ENCODE measurements at regions of chr6 and their contacts with region 1.

Region 1: DNA sequence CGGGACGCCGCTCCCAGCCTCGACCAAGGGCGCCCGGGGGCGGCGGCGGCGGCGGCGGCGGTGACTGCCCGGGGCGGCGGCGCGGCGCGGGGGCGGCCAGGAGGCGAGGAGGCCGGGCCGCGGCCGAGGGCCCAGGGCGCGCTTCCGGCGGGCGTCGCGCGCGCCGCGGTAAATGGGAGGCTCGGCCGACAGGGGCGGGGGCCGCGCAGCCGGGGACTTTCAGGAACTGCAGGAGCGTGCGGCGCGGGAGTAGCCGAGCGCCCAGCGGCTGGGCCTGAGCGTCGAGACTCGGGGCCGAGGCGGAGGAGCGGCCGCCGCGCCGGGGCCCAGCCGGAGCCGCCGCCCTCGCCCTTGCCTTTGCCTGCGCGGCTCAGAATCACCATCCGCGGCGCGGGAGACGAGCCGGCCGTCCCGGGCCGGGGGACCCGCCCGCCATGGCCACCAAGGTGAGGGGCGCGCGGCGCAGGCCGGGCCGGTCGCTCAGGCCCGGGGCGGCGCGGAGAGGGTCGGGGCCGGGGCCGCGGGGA is at the start of gene SNX9:
- DNase-seq: peak; percentile 27 to 81 (median 63)
- ATAC-seq: peak; percentile 46
- H3K4me3 ChIP-seq: peak within 1 kb of the TSS; percentile 43 to 51
- H3K4me3 Mint-ChIP-seq: peak within 1 kb of the TSS; percentile 93
- H3K27ac ChIP-seq: peak within 1 kb of the TSS; percentile 74 to 87
- H3K27ac Mint-ChIP-seq: peak within 1 kb of the TSS; percentile 98
- H3K4me1 ChIP-seq: peaks cover 21% of the 10 kb centered on the region
- H3K4me1 Mint-ChIP-seq: peaks cover 34% of the 10 kb centered on the region
- H3K27me3 ChIP-seq: no peaks in the 10 kb centered on the region
- H3K27me3 Mint-ChIP-seq: no peaks in the 10 kb centered on the region
- CTCF ChIP-seq: no peak
- total RNA-seq, gene SNX9: 54.8 to 63.2 TPM

Region 2: GRCh38 chr6:157647261-157647915 is 175.7 kb before region 1 on chr6:
- CTCF ChIA-PET with region 1: no interaction called
- POLR2A ChIA-PET with region 1: interaction called, 11 read pairs
- intact Hi-C with region 1: no loop called
- DNase-seq: no peak
- ATAC-seq: no peak
- H3K4me3 ChIP-seq: no peak overlapping the region
- H3K4me3 Mint-ChIP-seq: no peak overlapping the region
- H3K27ac ChIP-seq: no peak overlapping the region
- H3K27ac Mint-ChIP-seq: peak overlapping the region; percentile 50
- H3K4me1 ChIP-seq: no peaks in the 10 kb centered on the region
- H3K4me1 Mint-ChIP-seq: peaks cover 5% of the 10 kb centered on the region
- H3K27me3 ChIP-seq: no peaks in the 10 kb centered on the region
- H3K27me3 Mint-ChIP-seq: no peaks in the 10 kb centered on the region
- CTCF ChIP-seq: no peak

Region 3: DNA sequence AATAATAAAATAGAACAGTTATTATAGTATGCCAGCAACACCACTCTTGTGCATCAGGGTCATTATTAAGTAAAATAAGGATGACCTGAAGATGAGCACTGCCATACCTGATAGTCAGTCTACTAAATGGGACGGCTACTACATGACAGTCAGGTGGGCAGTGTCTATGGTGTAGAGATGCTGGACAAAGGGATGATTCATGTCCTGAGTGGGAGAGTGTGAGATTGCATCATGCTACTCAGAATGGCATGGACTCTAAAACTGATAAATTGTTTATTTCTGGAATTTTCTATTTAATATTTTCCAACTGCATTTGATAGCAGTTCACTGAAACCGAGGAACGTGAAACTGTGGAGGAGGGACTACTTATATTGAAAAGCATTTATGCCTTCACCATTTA is 38.8 kb after region 1 on chr6:
- CTCF ChIA-PET with region 1: no interaction called
- POLR2A ChIA-PET with region 1: no interaction called
- intact Hi-C with region 1: loop called (anchors 2 to 5 kb)
- DNase-seq: no peak
- ATAC-seq: no peak
- H3K4me3 ChIP-seq: no peak overlapping the region
- H3K4me3 Mint-ChIP-seq: no peak overlapping the region
- H3K27ac ChIP-seq: no peak overlapping the region
- H3K27ac Mint-ChIP-seq: no peak overlapping the region
- H3K4me1 ChIP-seq: peaks cover 38% of the 10 kb centered on the region
- H3K4me1 Mint-ChIP-seq: peaks cover 71% of the 10 kb centered on the region
- H3K27me3 ChIP-seq: no peaks in the 10 kb centered on the region
- H3K27me3 Mint-ChIP-seq: no peaks in the 10 kb centered on the region
- CTCF ChIP-seq: no peak

Region 4: DNA sequence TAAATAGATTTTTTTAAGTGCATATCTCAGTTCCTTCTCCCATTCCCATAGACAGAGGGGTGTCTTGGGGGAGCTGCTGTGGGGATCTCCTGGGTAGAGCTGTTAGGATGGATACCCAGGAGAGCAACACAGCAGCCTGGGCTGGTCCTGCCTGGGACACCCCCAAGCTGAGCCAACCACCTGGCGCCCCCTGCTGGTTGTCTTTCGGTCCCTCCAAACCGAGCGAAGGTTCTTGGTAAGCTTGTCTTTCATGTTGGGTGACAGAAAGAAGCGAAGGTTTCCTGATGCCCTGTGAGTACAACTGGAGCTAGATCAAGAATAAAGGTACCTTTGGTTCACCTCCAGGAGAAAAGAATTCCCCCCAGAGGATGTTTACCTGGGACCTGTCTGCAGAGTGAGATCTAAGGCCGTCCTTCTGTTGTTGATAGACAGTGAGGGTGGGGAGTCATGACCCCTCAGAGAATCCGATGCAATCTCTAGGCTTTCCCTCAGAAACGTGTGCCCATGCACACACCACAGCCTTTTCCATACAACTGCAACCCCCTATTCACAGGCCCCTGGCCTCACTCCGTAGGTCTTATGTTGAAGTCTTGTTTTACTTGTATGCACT is 50.8 kb after region 1 on chr6:
- CTCF ChIA-PET with region 1: interaction called, 3 read pairs
- POLR2A ChIA-PET with region 1: no interaction called
- intact Hi-C with region 1: loop called (anchors 2 to 5 kb)
- DNase-seq: peak; percentile 65 to 91 (median 81)
- ATAC-seq: peak; percentile 76
- H3K4me3 ChIP-seq: no peak overlapping the region
- H3K4me3 Mint-ChIP-seq: no peak overlapping the region
- H3K27ac ChIP-seq: no peak overlapping the region
- H3K27ac Mint-ChIP-seq: no peak overlapping the region
- H3K4me1 ChIP-seq: peaks cover 25% of the 10 kb centered on the region
- H3K4me1 Mint-ChIP-seq: peaks cover 29% of the 10 kb centered on the region
- H3K27me3 ChIP-seq: no peaks in the 10 kb centered on the region
- H3K27me3 Mint-ChIP-seq: no peaks in the 10 kb centered on the region
- CTCF ChIP-seq: peak; percentile 84

Region 5: DNA sequence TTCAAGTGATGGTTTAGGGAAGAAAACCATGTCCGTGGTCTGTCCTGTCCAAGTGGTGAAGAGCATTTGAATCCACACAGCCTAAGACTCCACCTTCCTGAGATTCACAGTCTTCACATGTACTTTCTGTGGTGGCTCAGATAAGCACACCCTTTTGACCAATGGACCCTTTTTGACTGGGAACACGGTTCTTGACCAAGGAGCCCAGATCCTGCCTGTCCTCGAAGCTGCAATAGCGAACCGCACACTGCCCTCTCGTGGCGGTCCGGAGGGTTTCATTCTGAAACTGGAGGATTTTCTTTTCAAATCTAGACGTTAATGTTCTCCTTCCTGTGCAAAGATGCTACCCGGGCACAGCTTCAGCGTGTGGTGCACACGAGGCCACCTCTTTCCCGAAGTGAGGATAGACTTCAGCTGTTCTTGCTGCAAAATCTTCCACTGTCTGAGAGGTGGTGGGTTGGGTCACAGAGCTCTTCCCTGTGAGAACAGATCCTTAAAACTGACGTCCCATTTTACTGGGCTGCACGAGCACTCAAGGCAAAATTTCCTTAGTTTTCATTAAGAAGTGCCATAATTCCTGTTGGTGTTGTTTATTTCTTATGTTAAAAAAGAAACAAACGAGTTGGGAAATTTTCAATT is 249.1 kb after region 1 on chr6:
- CTCF ChIA-PET with region 1: no interaction called
- POLR2A ChIA-PET with region 1: no interaction called
- intact Hi-C with region 1: loop called in 1 of 2 experiments (anchors 5 kb)
- DNase-seq: peak; percentile 35 to 81 (median 62)
- ATAC-seq: peak; percentile 80
- H3K4me3 ChIP-seq: no peak overlapping the region
- H3K4me3 Mint-ChIP-seq: no peak overlapping the region
- H3K27ac ChIP-seq: no peak overlapping the region
- H3K27ac Mint-ChIP-seq: no peak overlapping the region
- H3K4me1 ChIP-seq: peaks cover 8% of the 10 kb centered on the region
- H3K4me1 Mint-ChIP-seq: peaks cover 6% of the 10 kb centered on the region
- H3K27me3 ChIP-seq: no peaks in the 10 kb centered on the region
- H3K27me3 Mint-ChIP-seq: no peaks in the 10 kb centered on the region
- CTCF ChIP-seq: peak; percentile 80

Measured in CD8-positive, alpha-beta T cell (primary cell).